ENCODE measurements at regions of chr21 and their contacts with region 1.

Region 1: DNA sequence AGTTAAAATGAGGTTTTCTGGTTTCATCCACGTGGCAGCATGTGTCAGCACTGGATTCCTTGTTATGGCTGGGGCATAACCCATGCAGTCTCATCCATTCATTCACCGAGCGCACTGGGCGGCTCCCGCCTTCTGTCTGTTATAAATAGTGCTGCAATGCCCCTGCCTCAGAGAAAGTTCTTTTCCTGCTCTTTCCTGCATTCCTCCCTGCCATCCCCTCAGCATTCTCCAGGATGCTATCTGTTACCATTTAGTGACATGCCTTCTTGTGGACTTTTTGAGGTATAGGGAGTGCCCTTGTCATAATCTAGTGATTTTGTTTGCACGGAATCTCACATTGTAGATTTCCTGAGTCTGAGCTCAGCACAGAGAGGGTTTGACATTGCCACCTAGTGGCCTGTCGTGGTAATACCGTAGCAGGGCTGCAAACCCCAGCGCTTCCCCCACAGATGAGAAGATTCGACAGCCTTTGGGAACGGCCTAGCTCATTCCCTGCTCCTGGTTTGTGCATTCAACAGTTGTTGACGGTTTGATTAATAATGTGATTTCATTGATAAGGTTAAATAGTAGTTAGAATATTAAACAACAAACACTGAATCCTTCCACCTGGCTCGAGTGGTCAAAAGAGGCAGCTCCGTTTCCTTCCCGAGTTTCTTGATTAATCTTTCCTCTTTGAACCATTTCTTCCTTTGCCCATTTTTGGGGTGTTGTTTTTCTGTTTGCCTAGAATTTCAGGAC is 46.3 kb downstream of the UMODL1 start:
- DNase-seq: peak; percentile 67
- H3K4me3 ChIP-seq: peak overlapping the region; percentile 27
- H3K27ac ChIP-seq: no peak overlapping the region
- H3K4me1 ChIP-seq: peaks cover 24% of the 10 kb centered on the region
- H3K27me3 ChIP-seq: peaks cover 92% of the 10 kb centered on the region
- CTCF ChIP-seq: peak; percentile 96

Region 2: DNA sequence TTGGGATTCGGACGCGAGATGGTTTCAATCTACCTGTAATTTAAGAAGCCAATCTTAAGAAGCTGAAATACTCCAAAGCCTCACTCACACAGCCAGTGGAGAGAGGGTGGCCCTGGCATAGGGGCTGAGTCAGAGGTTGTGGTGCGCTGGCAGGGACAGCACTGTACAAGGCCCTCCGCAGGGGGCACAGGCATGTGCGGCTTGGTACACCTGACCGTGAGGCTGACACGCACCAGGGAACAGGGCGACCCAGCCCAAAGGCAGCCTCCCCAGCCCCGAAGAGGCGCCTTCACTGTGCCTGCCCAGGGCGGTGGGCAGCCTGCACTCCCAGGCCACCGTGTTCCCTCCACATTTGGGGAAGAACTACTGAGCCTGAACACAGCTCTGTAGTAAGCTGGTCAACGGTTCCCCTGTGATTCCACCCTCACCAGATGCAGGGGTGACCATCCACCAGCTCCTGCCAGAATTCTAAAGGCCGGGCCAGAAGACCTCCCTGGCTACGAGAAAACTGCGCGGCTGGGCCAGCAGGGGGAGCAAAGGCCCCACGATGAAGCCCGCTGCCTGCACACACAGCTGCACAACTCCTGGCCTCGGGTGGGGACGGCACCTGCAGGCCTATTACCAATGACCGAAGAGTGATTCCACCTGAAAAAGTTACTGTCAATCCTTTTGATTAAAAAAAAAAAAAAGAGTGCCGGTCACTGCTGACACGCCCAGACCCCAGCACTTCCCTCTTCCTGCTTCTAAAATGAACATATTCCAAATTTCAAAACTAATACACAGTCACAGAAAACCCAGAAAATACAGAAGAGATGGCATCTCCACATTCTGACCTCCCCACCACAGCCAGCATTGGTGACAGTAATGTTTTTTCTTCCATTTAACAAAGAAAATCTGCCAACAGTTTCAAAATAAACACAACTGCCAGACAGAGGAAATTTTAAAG is 300.9 kb before region 1 on chr21:
- intact Hi-C with region 1: loop called (anchors 2 kb)
- DNase-seq: peak; percentile 55
- H3K4me3 ChIP-seq: no peak overlapping the region
- H3K27ac ChIP-seq: no peak overlapping the region
- H3K4me1 ChIP-seq: peaks cover 4% of the 10 kb centered on the region
- H3K27me3 ChIP-seq: no peaks in the 10 kb centered on the region
- CTCF ChIP-seq: peak; percentile 87

Region 3: DNA sequence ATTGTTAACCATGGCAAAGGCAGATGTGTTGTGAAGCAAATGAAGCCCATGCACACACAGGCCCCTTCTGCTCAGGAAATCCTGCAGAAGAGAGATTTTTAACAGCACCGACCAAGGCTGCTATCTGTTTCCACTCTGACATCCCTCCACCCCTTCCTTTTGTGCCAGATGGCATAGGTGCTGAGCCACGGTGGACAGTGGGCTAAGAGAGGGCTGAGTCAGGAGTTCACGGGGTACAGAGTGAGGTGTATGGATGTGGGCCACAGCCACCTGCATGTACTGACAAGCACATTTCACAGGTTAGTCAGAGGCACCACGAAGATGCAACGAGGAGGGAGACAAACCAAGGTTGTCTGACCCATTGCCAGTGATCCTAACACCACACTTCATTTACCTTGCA is 369.1 kb after region 1 on chr21:
- intact Hi-C with region 1: no loop called
- DNase-seq: no peak
- H3K4me3 ChIP-seq: no peak overlapping the region
- H3K27ac ChIP-seq: no peak overlapping the region
- H3K4me1 ChIP-seq: no peaks in the 10 kb centered on the region
- H3K27me3 ChIP-seq: peaks cover 27% of the 10 kb centered on the region
- CTCF ChIP-seq: no peak

Measured in left ventricle myocardium inferior (tissue), 1 donor.